CD8-positive, alpha-beta T cell (primary cell): ENCODE measurements at regions of chr17 and their contacts with region 1.

Region 1: DNA sequence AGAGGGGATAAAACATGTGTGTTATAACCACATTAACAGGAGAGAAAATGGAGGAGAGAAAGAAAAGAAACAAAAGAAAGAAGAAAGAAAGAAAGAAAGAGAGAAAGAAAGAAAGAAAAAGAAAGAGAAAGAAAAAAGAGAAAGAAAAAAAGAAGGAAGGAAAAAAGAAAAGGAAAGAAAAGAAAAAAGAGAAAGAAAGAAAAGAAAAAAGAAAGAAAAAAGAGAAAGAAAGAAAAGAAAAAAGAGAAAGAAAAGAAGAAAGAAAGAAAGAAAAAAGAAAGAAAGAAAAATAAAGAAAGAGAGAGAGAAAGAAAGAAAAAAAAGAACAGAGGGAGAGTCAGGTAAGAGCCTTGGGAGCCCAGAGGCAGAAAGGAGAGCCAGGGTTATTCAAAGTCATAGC is 446.6 kb upstream of the ASIC2 start:
- DNase-seq: no peak
- ATAC-seq: no peak
- H3K4me3 ChIP-seq: no peak overlapping the region
- H3K4me3 Mint-ChIP-seq: no peak overlapping the region
- H3K27ac ChIP-seq: no peak overlapping the region
- H3K27ac Mint-ChIP-seq: no peak overlapping the region
- H3K4me1 ChIP-seq: no peaks in the 10 kb centered on the region
- H3K4me1 Mint-ChIP-seq: no peaks in the 10 kb centered on the region
- H3K27me3 ChIP-seq: no peaks in the 10 kb centered on the region
- H3K27me3 Mint-ChIP-seq: peaks cover 37% of the 10 kb centered on the region
- CTCF ChIP-seq: no peak

Region 2: GRCh38 chr17:33200587-33200986 is 539.1 kb before region 1 on chr17:
- CTCF ChIA-PET with region 1: no interaction called
- POLR2A ChIA-PET with region 1: no interaction called
- intact Hi-C with region 1: no loop called
- DNase-seq: no peak
- ATAC-seq: no peak
- H3K4me3 ChIP-seq: no peak overlapping the region
- H3K4me3 Mint-ChIP-seq: no peak overlapping the region
- H3K27ac ChIP-seq: no peak overlapping the region
- H3K27ac Mint-ChIP-seq: no peak overlapping the region
- H3K4me1 ChIP-seq: no peaks in the 10 kb centered on the region
- H3K4me1 Mint-ChIP-seq: no peaks in the 10 kb centered on the region
- H3K27me3 ChIP-seq: no peaks in the 10 kb centered on the region
- H3K27me3 Mint-ChIP-seq: peaks cover 7% of the 10 kb centered on the region
- CTCF ChIP-seq: no peak

Region 3: DNA sequence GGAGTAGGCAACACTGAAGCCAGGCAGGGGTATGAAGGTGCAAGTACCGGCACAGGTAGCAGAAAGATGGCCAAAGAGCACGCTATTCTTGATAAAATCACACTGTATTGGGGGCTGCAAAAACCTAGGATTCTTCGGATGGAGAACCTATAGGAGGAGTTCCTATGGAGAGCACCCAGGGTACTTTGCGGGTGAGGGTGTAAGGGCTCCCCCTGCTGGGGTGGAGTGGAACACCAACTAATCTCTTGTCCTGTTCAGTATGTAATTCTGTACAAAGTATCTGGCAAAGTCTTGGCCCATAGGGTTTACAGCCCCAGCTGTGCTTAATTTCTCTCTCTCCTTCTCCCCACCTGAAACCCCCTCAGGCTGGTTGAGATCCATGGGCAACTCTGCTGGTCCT is 53.5 kb before region 1 on chr17:
- CTCF ChIA-PET with region 1: no interaction called
- POLR2A ChIA-PET with region 1: no interaction called
- intact Hi-C with region 1: loop called in 1 of 2 experiments (anchors 5 kb)
- DNase-seq: peak in 2 of 9 experiments; percentile 10 to 14
- ATAC-seq: no peak
- H3K4me3 ChIP-seq: no peak overlapping the region
- H3K4me3 Mint-ChIP-seq: no peak overlapping the region
- H3K27ac ChIP-seq: no peak overlapping the region
- H3K27ac Mint-ChIP-seq: no peak overlapping the region
- H3K4me1 ChIP-seq: no peaks in the 10 kb centered on the region
- H3K4me1 Mint-ChIP-seq: no peaks in the 10 kb centered on the region
- H3K27me3 ChIP-seq: no peaks in the 10 kb centered on the region
- H3K27me3 Mint-ChIP-seq: no peaks in the 10 kb centered on the region
- CTCF ChIP-seq: no peak

Region 4: GRCh38 chr17:33802349-33803198 is 62.9 kb after region 1 on chr17:
- CTCF ChIA-PET with region 1: no interaction called
- POLR2A ChIA-PET with region 1: no interaction called
- intact Hi-C with region 1: no loop called
- DNase-seq: no peak
- ATAC-seq: no peak
- H3K4me3 ChIP-seq: no peak overlapping the region
- H3K4me3 Mint-ChIP-seq: no peak overlapping the region
- H3K27ac ChIP-seq: no peak overlapping the region
- H3K27ac Mint-ChIP-seq: no peak overlapping the region
- H3K4me1 ChIP-seq: no peaks in the 10 kb centered on the region
- H3K4me1 Mint-ChIP-seq: no peaks in the 10 kb centered on the region
- H3K27me3 ChIP-seq: no peaks in the 10 kb centered on the region
- H3K27me3 Mint-ChIP-seq: peaks cover 43% of the 10 kb centered on the region
- CTCF ChIP-seq: no peak